Aorta (tissue), 5 donors: ENCODE measurements at regions of chr1 and their contacts with region 1.

Region 1: DNA sequence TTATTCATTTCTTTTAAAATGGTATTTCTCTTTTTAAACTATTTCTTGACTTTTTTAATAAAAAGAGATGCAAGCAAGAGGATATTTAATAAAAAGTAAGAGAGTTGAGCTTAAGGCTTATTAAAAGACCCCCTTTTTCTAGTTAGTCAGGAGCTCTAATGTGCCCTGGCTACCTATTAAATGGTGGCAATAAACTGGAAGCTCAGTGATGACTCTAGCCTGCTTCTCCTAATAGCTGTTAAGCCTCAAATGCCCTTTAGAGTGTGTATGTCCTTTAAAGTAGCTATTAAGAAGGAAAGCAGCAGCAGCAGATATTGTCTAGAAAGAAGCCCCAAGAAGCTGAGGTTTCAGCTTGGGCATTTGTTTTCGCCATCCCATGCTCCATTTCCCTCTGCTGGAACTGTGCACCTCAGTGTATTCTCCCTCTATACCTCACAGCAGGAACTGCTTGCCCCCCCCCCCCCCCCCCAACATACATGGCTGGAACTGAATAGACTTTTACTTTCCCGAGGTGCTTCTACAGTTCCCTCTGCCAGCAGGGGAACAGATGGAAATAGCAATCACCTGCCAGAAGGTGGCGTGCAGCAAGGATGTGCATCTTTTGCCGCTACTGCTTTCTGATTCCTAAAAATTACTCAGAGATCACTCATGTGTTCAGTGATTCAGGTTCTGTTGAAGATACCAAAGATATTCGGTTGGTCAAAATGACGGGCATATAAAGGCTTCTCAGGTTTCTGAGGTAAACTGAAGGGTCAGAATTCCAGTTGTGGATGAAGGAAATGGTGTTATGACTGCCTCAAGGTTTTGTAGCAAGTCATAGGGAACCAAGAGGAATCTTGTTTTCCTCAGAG is 2.5 kb downstream of the RGS4 start:
- DNase-seq: peak; percentile 75 to 86
- ATAC-seq: peak; percentile 55
- H3K4me3 ChIP-seq: peak overlapping the region; percentile 35 to 72
- H3K27ac ChIP-seq: peak overlapping the region; percentile 43 to 67
- H3K4me1 ChIP-seq: peaks cover 4 to 8% of the 10 kb centered on the region in 2 donors
- H3K27me3 ChIP-seq: no peaks in the 10 kb centered on the region

Region 2: GRCh38 chr1:162854245-162854882 is 217.3 kb before region 1 on chr1:
- intact Hi-C with region 1: loop called in 1 of 2 experiments (anchors 5 kb)
- DNase-seq: peak; percentile 76 to 82
- ATAC-seq: no peak
- H3K4me3 ChIP-seq: no peak overlapping the region
- H3K27ac ChIP-seq: peak overlapping the region in 1 of 2 donors; percentile 73
- H3K4me1 ChIP-seq: peaks cover 10 to 12% of the 10 kb centered on the region in 2 donors
- H3K27me3 ChIP-seq: no peaks in the 10 kb centered on the region

Region 3: DNA sequence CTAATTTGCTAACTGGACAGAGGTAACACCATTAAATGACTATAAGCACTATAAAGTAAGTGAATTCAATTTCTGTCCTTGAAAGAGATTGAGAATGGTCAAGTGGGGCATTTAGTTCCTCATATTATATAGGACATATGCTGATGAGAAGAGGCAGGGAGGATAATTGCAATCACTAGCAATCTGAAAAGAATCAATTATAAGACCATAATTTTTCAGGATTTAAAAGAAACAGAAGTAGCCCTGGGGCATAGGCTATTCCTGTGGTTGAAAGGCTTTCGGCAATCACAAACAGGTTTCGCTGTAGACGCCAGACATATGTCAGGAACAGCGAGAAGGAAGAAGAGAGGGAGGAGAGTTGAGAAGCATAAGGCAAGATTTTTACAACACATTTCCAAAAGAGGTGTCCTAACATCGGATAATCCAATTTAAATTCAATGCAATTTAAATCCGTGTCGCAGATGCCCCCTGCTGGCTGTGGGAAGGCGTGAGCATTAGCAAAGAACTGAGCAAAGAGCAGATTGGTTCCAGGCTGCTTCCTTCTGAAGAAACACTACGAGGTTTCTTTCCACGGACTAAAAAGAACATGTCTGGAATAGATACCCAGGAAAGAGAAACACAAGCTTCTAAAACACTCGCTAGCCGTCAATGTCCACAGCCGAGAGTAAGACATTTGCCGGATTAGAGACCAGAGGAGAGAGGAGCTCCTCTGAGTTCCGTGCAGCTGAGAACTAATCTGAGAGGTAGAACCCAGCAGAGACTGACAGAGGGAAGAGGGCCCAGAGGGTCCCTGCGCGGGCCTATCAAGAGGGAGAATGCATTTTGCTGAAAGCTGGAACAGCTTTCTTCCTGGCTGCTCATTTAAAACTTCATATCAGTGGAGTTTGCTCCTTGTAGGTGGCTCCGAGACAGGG is 103.2 kb after region 1 on chr1:
- intact Hi-C with region 1: loop called (anchors 5 kb)
- DNase-seq: peak; percentile 85 to 90
- ATAC-seq: peak; percentile 72
- H3K4me3 ChIP-seq: peak overlapping the region in 1 of 2 donors; percentile 69
- H3K27ac ChIP-seq: peak overlapping the region; percentile 90 to 95
- H3K4me1 ChIP-seq: peaks cover 2 to 3% of the 10 kb centered on the region in 2 donors
- H3K27me3 ChIP-seq: no peaks in the 10 kb centered on the region